T-cell (primary cell): ENCODE measurements at regions of chr2 and their contacts with region 1.

Region 1: GRCh38 chr2:131010566-131010965 is 82.7 kb downstream of the FAM168B start:
- DNase-seq: peak in 14 of 35 experiments; percentile 6 to 52 (median 16)
- ATAC-seq: peak; percentile 63 to 92 (median 84)
- H3K4me3 ChIP-seq: no peak overlapping the region
- H3K4me3 Mint-ChIP-seq: peak overlapping the region; percentile 18 to 52 (median 39)
- H3K27ac ChIP-seq: no peak overlapping the region
- H3K27ac Mint-ChIP-seq: peak overlapping the region; percentile 65 to 72
- H3K4me1 ChIP-seq: peaks cover 12 to 18% of the 10 kb centered on the region in 2 experiments
- H3K4me1 Mint-ChIP-seq: peaks cover 29 to 32% (median 32%) of the 10 kb centered on the region in 3 donors
- H3K27me3 ChIP-seq: peaks cover 0 to 6% of the 10 kb centered on the region in 2 experiments
- H3K27me3 Mint-ChIP-seq: peaks cover 8 to 17% of the 10 kb centered on the region in 2 donors

Region 2: DNA sequence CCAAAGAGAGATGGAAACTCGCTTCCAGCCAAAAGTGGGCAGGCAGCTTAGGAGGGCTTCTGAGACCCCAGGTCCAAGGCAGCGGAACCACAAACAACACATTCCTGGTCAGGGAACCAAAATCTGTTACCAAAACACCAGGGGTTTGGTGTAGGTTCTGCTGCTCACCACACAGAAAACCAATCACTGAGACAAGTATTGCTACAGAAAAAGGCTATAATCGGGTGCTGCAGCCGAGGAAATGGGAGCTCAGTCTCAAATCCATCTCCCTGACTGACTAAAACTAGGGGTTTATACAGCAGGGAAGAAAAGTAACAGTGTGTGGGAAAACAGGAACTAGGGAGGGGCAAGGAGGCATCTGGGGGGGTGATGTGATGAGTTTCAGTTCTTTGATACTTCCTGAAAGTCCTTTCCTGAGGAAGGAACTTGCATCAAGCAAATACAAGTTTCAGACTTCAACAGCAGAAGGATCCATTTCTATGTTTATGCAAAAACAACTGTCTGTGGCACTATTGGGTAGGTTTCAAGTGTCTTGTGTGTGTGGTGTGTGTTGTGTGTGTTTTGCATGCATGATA is 25.3 kb before region 1 on chr2:
- CTCF ChIA-PET with region 1: interaction called in 1 of 2 experiments, 10 read pairs
- POLR2A ChIA-PET with region 1: no interaction called
- DNase-seq: no peak
- ATAC-seq: no peak
- H3K4me3 ChIP-seq: no peak overlapping the region
- H3K4me3 Mint-ChIP-seq: no peak overlapping the region
- H3K27ac ChIP-seq: no peak overlapping the region
- H3K27ac Mint-ChIP-seq: no peak overlapping the region
- H3K4me1 ChIP-seq: no peaks in the 10 kb centered on the region
- H3K4me1 Mint-ChIP-seq: peaks cover 6 to 11% (median 8%) of the 10 kb centered on the region in 3 donors
- H3K27me3 ChIP-seq: peaks cover 0 to 5% of the 10 kb centered on the region in 2 experiments
- H3K27me3 Mint-ChIP-seq: peaks cover 0 to 5% of the 10 kb centered on the region in 2 donors

Region 3: DNA sequence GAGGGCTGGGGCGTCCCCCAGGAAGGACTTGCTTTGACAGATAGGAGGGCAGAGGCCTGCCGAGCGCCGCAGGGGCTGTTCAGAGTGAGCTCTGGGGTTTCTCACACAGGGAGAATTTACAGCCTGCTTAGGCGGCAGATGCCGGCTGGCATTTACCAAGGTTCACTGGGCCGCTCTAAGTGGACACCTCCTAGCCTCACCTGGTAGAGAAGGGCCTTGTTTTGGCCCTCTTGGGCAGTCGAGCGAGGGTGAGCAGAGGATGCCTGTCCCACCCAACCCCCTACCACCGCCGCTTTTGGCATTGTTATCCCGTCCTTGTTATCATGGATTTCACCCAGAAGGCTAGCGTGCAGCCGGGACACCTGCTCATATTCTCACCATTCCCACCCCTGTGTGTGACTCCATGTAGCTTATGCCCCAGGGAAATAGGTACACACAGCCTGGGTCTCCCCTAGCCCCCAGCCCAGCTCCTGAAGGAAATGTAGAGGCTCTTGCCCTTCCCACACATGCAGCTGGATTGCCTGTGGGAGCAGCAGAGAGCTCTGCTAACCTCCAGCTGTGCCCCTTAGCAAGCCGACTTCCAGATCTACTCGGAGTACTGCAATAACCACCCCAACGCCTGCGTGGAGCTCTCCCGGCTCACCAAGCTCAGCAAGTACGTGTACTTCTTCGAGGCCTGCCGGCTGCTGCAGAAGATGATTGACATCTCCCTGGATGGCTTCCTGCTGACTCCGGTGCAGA is 30.3 kb after region 1 on chr2:
- CTCF ChIA-PET with region 1: no interaction called
- POLR2A ChIA-PET with region 1: interaction called in 1 of 2 experiments, 10 read pairs
- DNase-seq: peak in 10 of 35 experiments; percentile 17 to 45 (median 22)
- ATAC-seq: peak; percentile 16 to 37 (median 20)
- H3K4me3 ChIP-seq: peak overlapping the region; percentile 53 to 58
- H3K4me3 Mint-ChIP-seq: peak overlapping the region; percentile 65 to 97 (median 73)
- H3K27ac ChIP-seq: peak overlapping the region; percentile 12
- H3K27ac Mint-ChIP-seq: peak overlapping the region; percentile 63 to 89
- H3K4me1 ChIP-seq: peaks cover 15 to 45% of the 10 kb centered on the region in 2 experiments
- H3K4me1 Mint-ChIP-seq: peaks cover 20 to 41% (median 28%) of the 10 kb centered on the region in 3 donors
- H3K27me3 ChIP-seq: peaks cover 0 to 44% of the 10 kb centered on the region in 2 experiments
- H3K27me3 Mint-ChIP-seq: peaks cover 0 to 14% of the 10 kb centered on the region in 2 donors